Activated naive CD4-positive, alpha-beta T cell treated with anti-CD3 and anti-CD28 coated beads for 36 hours (primary cell): ENCODE measurements at regions of chr22 and their contacts with region 1.

Region 1: GRCh38 chr22:39960791-39961746 is 872 bp downstream of the TMA7B start:
- DNase-seq: peak; percentile 82
- H3K4me3 Mint-ChIP-seq: peak overlapping the region; percentile 36
- H3K27ac Mint-ChIP-seq: peak overlapping the region; percentile 47
- H3K4me1 Mint-ChIP-seq: peaks cover 54% of the 10 kb centered on the region
- H3K27me3 Mint-ChIP-seq: no peaks in the 10 kb centered on the region

Region 2: GRCh38 chr22:39405346-39406085 is 555.6 kb before region 1 on chr22:
- CTCF ChIA-PET with region 1: no interaction called
- intact Hi-C with region 1: loop called (anchors 10 kb)
- DNase-seq: peak; percentile 55
- H3K4me3 Mint-ChIP-seq: no peak overlapping the region
- H3K27ac Mint-ChIP-seq: no peak overlapping the region
- H3K4me1 Mint-ChIP-seq: peaks cover 67% of the 10 kb centered on the region
- H3K27me3 Mint-ChIP-seq: no peaks in the 10 kb centered on the region

Region 3: DNA sequence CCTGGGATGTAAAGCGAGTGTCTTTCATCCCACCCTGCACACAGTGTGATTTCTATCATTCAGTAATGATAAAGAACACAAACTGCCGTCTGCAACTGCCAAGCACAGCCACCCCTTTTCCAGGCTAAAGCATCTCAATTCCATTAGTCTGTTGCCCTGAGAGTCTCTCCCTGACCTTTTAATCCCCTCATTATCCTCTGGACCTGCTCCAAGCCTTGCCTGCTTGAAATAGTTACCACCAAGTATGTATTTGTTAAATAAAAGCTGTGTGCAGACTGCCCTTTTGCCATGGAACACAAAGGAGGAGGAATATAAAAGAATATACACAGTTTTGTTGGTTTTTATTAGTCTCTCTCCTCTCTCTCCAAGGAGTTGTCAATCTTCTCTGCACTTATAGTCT is 47.2 kb before region 1 on chr22:
- CTCF ChIA-PET with region 1: no interaction called
- intact Hi-C with region 1: no loop called
- DNase-seq: no peak
- H3K4me3 Mint-ChIP-seq: peak overlapping the region; percentile 38
- H3K27ac Mint-ChIP-seq: peak overlapping the region; percentile 100
- H3K4me1 Mint-ChIP-seq: peaks cover 89% of the 10 kb centered on the region
- H3K27me3 Mint-ChIP-seq: no peaks in the 10 kb centered on the region

Region 4: GRCh38 chr22:39927544-39927943 is 33.5 kb before region 1 on chr22:
- CTCF ChIA-PET with region 1: interaction called, 4 read pairs
- intact Hi-C with region 1: loop called (anchors 1 kb)
- DNase-seq: peak; percentile 69
- H3K4me3 Mint-ChIP-seq: no peak overlapping the region
- H3K27ac Mint-ChIP-seq: no peak overlapping the region
- H3K4me1 Mint-ChIP-seq: peaks cover 33% of the 10 kb centered on the region
- H3K27me3 Mint-ChIP-seq: no peaks in the 10 kb centered on the region

Region 5: DNA sequence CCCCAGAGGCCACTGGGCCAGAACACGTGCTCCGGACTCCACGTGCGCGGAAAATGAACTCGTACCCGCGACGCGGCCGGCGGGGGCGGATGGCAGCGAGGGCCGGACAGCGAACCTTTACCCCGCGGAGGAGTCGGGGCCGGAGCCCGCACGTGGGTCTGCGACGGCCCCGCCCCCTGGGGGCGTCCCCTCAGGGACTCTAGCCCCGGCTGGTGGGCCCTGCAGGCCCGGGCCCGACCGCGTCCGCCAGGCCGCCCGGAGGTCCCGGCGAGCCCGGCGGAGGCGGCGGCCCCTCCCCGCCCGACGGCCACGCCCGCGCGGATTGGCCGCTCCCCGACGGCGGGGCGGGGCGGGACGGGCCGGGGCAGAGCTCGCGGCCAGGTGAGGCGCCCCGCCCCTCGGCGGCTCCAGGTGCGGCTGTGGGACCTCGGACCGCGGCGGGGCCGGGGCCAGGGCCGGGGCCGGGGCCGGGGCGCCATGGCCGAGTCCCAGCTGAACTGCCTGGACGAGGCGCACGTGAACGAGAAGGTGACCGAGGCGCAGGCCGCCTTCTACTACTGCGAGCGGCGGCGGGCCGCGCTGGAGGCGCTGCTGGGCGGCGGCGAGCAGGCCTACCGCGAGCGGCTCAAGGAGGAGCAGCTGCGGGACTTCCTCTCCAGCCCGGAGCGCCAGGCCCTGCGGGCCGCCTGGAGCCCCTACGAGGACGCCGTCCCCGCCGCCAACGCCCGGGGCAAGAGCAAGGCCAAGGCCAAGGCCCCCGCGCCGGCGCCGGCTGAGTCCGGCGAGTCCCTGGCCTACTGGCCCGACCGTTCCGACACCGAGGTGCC is 33.7 kb after region 1 on chr22 and contains the start of gene FAM83F:
- CTCF ChIA-PET with region 1: no interaction called
- intact Hi-C with region 1: loop called (anchors 2 kb)
- DNase-seq: peak; percentile 23
- H3K4me3 Mint-ChIP-seq: peak within 1 kb of the TSS; percentile 67
- H3K27ac Mint-ChIP-seq: no peak within 1 kb of the TSS
- H3K4me1 Mint-ChIP-seq: peaks cover 11% of the 10 kb centered on the region
- H3K27me3 Mint-ChIP-seq: peaks cover 3% of the 10 kb centered on the region
- total RNA-seq, gene FAM83F: 1.8 to 1.9 TPM